Endothelial cell of umbilical vein (primary cell): ENCODE measurements at regions of chr6 and their contacts with region 1.

Region 1: DNA sequence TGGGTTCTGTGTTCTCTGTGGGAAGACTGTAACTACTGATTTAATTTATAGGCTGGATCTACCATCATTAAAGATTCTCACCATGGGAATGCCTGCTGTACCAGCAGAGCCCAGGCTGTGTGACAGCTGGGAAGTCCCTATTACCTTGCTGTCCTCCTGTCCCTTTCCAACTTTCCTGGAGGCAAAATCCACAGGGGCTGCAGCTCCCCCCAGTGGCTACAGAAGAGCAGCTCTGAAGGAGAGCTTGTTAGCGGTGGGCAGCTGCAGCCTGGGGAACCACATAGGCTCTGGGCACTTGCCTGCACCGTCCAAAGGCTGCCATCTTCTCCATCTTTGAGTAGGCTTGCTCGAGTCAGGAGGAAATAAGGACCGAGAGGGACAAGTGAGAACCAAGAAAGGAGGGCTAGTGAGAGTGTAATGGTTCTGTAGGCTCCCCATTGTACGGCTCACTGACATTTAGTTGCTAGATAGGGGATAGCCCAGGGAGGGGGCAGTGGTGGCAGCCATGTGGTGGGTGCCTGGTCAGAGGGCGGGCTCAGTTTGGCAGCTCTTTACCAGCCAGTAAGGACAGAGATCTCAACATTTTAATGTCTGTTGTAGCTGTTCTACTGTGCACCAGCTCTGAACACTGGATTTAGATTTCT is 155.1 kb upstream of the MLIP start:
- DNase-seq: peak; percentile 83
- H3K4me3 ChIP-seq: no peak overlapping the region
- H3K27ac ChIP-seq: no peak overlapping the region
- H3K4me1 ChIP-seq: no peaks in the 10 kb centered on the region
- H3K27me3 ChIP-seq: no peaks in the 10 kb centered on the region
- CTCF ChIP-seq: peak; percentile 62 to 92
- POLR2A ChIP-seq: no peak

Region 2: DNA sequence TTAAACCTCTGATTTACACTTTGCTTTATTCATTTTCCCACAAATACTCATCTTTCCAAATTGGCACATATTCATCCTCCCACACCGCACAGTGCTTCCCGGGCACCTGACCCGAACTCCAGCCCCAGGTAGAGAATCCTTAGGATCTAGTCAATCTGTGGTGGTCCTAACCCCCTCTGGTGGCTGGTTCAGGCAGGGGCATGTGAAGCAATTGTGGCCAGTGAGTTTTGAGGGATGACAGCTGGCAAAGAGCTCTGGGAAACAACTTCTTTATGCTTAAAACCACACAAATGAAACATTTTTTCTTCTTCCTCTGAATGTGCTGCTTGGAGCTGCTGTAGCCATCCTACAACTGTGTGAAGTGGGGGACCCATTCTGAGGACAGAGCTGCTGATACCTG is 662.1 kb before region 1 on chr6:
- CTCF ChIA-PET with region 1: no interaction called
- POLR2A ChIA-PET with region 1: no interaction called
- dilution Hi-C with region 1: no loop called
- intact Hi-C with region 1: no loop called
- DNase-seq: peak; percentile 44
- H3K4me3 ChIP-seq: no peak overlapping the region
- H3K27ac ChIP-seq: no peak overlapping the region
- H3K4me1 ChIP-seq: peaks cover 14% of the 10 kb centered on the region
- H3K27me3 ChIP-seq: no peaks in the 10 kb centered on the region
- CTCF ChIP-seq: peak; percentile 67 to 77
- POLR2A ChIP-seq: no peak

Region 3: GRCh38 chr6:53718597-53719460 is 237.4 kb before region 1 on chr6:
- CTCF ChIA-PET with region 1: interaction called, 194 read pairs
- POLR2A ChIA-PET with region 1: interaction called, 3 read pairs
- dilution Hi-C with region 1: no loop called
- intact Hi-C with region 1: loop called (anchors 1 kb)
- DNase-seq: peak; percentile 74
- H3K4me3 ChIP-seq: no peak overlapping the region
- H3K27ac ChIP-seq: no peak overlapping the region
- H3K4me1 ChIP-seq: no peaks in the 10 kb centered on the region
- H3K27me3 ChIP-seq: peaks cover 2 to 15% of the 10 kb centered on the region in 2 experiments
- CTCF ChIP-seq: peak; percentile 69 to 78
- POLR2A ChIP-seq: no peak

Region 4: GRCh38 chr6:53752856-53753255 is 203.3 kb before region 1 on chr6:
- CTCF ChIA-PET with region 1: interaction called, 13 read pairs
- POLR2A ChIA-PET with region 1: no interaction called
- dilution Hi-C with region 1: no loop called
- intact Hi-C with region 1: no loop called
- DNase-seq: peak; percentile 50
- H3K4me3 ChIP-seq: no peak overlapping the region
- H3K27ac ChIP-seq: peak overlapping the region; percentile 75
- H3K4me1 ChIP-seq: peaks cover 15% of the 10 kb centered on the region
- H3K27me3 ChIP-seq: no peaks in the 10 kb centered on the region
- CTCF ChIP-seq: no peak
- POLR2A ChIP-seq: no peak

Region 5: DNA sequence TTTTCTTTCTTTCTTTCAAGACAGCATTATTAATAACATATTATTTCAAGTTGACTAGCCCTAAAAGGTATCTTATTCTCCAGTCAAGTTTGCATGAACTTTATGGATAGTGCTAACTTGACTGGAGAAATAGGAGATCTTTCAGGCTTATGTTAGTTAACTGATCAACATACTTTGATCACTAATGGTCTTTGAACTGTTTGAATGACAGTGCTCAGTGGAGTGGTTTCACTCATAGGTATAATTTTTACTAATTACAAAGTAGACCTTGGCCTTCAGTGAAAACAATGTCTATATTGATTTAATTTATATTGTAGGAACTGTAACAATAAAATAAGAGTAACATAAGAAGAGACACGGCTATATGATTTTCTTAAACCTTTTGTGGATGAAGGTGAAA is 169.4 kb before region 1 on chr6:
- CTCF ChIA-PET with region 1: interaction called, 319 read pairs
- POLR2A ChIA-PET with region 1: no interaction called
- dilution Hi-C with region 1: no loop called
- intact Hi-C with region 1: no loop called
- DNase-seq: no peak
- H3K4me3 ChIP-seq: no peak overlapping the region
- H3K27ac ChIP-seq: no peak overlapping the region
- H3K4me1 ChIP-seq: no peaks in the 10 kb centered on the region
- H3K27me3 ChIP-seq: no peaks in the 10 kb centered on the region
- CTCF ChIP-seq: no peak
- POLR2A ChIP-seq: no peak

Region 6: DNA sequence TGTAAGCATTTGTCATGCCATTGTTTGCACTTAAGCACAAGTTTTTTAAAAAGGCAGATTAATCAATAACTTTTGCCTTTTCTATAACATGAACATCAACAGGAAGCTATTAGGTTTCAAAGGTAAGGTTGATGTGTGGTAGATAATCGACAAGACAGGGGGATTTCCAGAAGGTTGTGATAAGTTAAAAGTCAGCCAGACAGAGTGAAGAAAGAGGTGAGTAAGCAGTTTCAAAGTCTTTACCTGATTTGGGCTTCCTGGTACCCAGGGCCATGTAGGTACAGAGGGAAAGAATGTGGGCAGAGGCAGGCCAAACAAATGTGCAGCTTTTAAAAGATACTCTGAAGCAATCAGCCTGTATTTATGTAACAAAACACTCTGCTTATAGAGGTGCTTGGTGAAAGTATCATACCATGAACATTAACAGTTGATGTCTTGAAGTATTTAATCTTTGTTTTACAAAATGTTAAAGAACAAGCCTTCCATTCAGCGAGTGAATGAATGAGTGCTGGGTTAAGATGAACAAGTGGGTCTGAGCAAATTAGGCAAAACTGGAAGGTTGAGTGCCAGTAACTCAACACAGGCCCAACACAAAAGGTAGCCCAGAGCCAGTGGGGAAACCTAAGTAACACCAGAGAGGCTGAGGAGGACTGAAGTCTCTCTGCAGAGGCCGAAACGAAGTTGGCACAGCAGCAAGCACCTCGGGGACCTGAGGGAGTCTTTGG is 101.2 kb before region 1 on chr6:
- CTCF ChIA-PET with region 1: interaction called, 14 read pairs
- POLR2A ChIA-PET with region 1: no interaction called
- dilution Hi-C with region 1: no loop called
- intact Hi-C with region 1: no loop called
- DNase-seq: no peak
- H3K4me3 ChIP-seq: no peak overlapping the region
- H3K27ac ChIP-seq: no peak overlapping the region
- H3K4me1 ChIP-seq: peaks cover 30% of the 10 kb centered on the region
- H3K27me3 ChIP-seq: no peaks in the 10 kb centered on the region
- CTCF ChIP-seq: no peak
- POLR2A ChIP-seq: no peak

Region 7: GRCh38 chr6:53943395-53943794 is 12.8 kb before region 1 on chr6:
- CTCF ChIA-PET with region 1: interaction called, 16 read pairs
- POLR2A ChIA-PET with region 1: no interaction called
- dilution Hi-C with region 1: no loop called
- intact Hi-C with region 1: no loop called
- DNase-seq: peak; percentile 77
- H3K4me3 ChIP-seq: no peak overlapping the region
- H3K27ac ChIP-seq: no peak overlapping the region
- H3K4me1 ChIP-seq: peaks cover 6% of the 10 kb centered on the region
- H3K27me3 ChIP-seq: no peaks in the 10 kb centered on the region
- CTCF ChIP-seq: no peak
- POLR2A ChIP-seq: no peak